ENCODE measurements at regions of chr20 and their contacts with region 1.

Region 1: DNA sequence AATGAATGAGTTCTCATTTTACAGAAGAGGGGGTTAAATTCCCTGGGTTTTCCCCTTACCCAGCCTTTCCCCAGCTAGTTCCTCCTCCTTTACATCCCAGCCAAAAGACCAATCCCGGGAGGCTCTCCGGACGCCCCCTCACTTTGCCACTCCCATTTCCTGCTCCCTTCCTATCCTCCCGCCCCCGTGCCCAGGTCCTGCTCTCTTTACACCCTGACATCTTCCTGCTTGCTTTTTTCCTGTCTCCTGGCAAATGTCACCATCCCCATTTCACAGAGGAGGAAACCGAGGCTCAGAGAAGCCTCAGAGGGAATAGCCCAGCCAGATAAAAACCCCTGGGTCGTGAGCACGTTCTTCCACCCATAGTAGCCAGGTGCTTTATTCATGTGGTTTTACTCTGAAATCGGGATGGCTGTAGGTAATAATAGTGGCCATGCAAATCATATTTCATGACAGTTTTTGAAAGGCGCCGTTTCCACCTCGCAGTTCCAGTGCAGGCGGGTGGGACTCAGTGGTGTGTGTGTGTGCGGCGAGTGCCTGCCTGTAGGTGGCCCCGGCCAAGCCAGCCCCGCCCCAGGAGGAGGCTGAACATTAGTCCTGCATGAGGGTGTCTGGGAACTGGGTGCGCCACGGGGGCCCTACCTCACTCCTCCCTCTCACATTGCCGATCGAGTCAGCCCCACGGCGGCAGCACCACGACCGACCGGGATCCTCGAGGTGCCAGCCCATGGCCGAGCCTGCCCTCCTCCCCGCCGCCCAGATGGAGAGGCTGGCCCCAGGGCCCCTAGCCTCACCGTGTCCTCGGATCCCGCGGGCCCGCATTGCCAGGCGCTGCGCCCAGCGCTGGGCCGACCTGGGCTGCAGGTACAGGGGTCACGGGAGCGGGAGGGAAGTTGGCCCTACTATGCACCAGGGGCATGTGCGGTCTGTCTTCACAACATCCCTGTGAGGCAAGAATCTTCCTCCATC is at the start of gene ARHGAP40:
- DNase-seq: peak; percentile 88
- H3K4me3 Mint-ChIP-seq: peak within 1 kb of the TSS; percentile 76
- H3K27ac Mint-ChIP-seq: peak within 1 kb of the TSS; percentile 73
- H3K4me1 Mint-ChIP-seq: peaks cover 56% of the 10 kb centered on the region
- H3K27me3 Mint-ChIP-seq: peaks cover 17% of the 10 kb centered on the region
- CTCF ChIP-seq: peak; percentile 63
- total RNA-seq, gene ARHGAP40: 8.3 and 9.7 TPM in 2 replicates

Region 2: GRCh38 chr20:38751360-38751976 is 150.0 kb after region 1 on chr20:
- CTCF ChIA-PET with region 1: no interaction called
- intact Hi-C with region 1: loop called (anchors 1 kb)
- DNase-seq: peak; percentile 52
- H3K4me3 Mint-ChIP-seq: no peak overlapping the region
- H3K27ac Mint-ChIP-seq: no peak overlapping the region
- H3K4me1 Mint-ChIP-seq: peaks cover 21% of the 10 kb centered on the region
- H3K27me3 Mint-ChIP-seq: no peaks in the 10 kb centered on the region
- CTCF ChIP-seq: peak; percentile 57

Measured in Calu3 (cell line).